Right cardiac atrium (tissue), 5 donors: ENCODE measurements at regions of chr16 and their contacts with region 1.

Region 1: DNA sequence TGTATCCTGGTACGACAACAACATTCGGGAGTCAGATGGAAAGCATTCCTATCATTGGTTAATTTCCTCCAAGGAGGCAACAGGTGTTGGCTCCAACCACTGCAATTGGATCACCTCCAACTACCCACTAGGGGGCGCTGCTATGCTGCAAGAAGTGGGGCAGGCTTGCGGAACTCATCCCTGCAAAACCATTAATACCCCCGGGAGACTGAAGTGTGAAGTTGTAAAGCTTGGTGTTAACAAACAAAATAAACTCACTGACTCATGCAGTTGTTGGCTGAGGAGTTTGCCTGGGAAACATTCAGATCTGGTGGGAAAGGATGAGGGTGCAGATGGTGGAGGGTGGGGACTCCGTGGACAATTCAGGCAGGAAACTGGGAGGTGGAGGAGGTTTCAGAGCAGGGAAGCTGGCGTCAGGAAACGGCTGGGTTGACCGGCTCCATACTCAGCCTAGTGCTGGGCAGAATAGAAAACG is 84.9 kb downstream of the HS3ST2 start:
- DNase-seq: peak; percentile 72 to 85 (median 81)
- ATAC-seq: peak; percentile 89 to 96
- H3K4me3 ChIP-seq: no peak overlapping the region
- H3K27ac ChIP-seq: no peak overlapping the region
- H3K4me1 ChIP-seq: no peaks in the 10 kb centered on the region
- H3K27me3 ChIP-seq: no peaks in the 10 kb centered on the region

Region 2: GRCh38 chr16:22948603-22949368 is 49.9 kb after region 1 on chr16:
- intact Hi-C with region 1: loop called in 2 of 4 experiments (anchors 5 to 10 kb)
- DNase-seq: peak; percentile 63 to 83 (median 69)
- ATAC-seq: peak; percentile 82 to 86
- H3K4me3 ChIP-seq: no peak overlapping the region
- H3K27ac ChIP-seq: no peak overlapping the region
- H3K4me1 ChIP-seq: no peaks in the 10 kb centered on the region
- H3K27me3 ChIP-seq: no peaks in the 10 kb centered on the region

Region 3: DNA sequence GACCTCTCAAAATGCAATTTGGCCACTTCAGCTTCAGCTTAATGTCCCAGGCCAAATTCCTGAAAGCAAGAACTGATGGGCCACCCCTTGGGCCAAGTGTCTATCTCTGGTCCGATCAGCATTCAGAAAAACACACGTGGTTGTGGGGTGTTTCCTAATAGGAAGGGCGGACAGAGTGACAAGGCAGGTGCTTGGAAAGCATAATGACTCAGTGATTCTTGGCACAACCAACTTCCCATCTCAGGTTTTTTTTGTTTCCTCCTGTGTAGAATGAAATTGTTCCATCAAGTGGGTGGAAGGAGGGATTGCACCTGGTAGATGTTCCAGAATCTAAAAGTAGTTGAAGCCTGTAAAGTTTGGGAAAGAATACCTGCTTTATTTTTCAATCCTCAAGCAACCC is 70.7 kb after region 1 on chr16:
- intact Hi-C with region 1: loop called in 2 of 4 experiments (anchors 10 kb)
- DNase-seq: peak in 1 of 3 donors; percentile 37
- ATAC-seq: peak in 1 of 2 donors; percentile 88
- H3K4me3 ChIP-seq: no peak overlapping the region
- H3K27ac ChIP-seq: no peak overlapping the region
- H3K4me1 ChIP-seq: peaks cover 9% of the 10 kb centered on the region
- H3K27me3 ChIP-seq: no peaks in the 10 kb centered on the region

Region 4: GRCh38 chr16:22977294-22977697 is 78.4 kb after region 1 on chr16:
- intact Hi-C with region 1: loop called in 1 of 4 experiments (anchors 10 kb)
- DNase-seq: no peak
- ATAC-seq: no peak
- H3K4me3 ChIP-seq: no peak overlapping the region
- H3K27ac ChIP-seq: no peak overlapping the region
- H3K4me1 ChIP-seq: no peaks in the 10 kb centered on the region
- H3K27me3 ChIP-seq: no peaks in the 10 kb centered on the region

Region 5: DNA sequence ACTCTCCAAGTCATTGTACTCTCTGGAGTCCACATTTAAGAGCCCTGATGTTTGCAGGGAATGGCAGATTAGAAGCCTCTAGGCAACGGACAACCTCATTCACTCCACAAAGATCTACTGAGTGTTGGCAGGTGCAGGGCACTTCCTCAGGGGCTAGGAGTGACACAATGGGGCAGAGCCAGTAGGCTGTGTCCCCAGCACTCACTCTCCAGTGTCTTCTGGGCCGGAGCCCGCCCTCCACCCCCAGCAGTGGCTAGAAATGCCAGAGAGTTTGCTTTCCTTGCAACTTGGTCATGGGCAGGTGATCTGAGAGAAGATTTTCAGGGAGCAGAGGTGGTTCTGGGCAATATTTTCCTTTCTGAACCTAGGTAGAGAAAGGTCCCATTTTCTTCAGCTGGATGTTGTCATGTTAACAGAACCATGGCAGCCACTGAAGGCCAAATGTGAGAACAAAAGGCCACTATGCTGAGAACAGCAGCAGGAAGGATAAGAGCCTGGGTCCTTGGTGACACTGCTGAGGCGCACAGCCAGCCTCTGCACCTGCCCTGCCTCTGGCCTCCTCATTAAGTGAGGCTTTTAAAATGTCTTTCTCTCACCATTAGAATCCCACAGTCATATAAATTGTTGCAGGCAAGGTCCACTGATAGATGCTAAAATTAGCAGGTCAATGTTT is 154.1 kb after region 1 on chr16:
- intact Hi-C with region 1: loop called in 1 of 4 experiments (anchors 10 kb)
- DNase-seq: no peak
- ATAC-seq: no peak
- H3K4me3 ChIP-seq: no peak overlapping the region
- H3K27ac ChIP-seq: no peak overlapping the region
- H3K4me1 ChIP-seq: no peaks in the 10 kb centered on the region
- H3K27me3 ChIP-seq: no peaks in the 10 kb centered on the region

Region 6: GRCh38 chr16:23060458-23061320 is 161.8 kb after region 1 on chr16:
- intact Hi-C with region 1: loop called in 2 of 4 experiments (anchors 5 to 10 kb)
- DNase-seq: peak; percentile 58 to 80 (median 63)
- ATAC-seq: peak; percentile 83 to 90
- H3K4me3 ChIP-seq: no peak overlapping the region
- H3K27ac ChIP-seq: no peak overlapping the region
- H3K4me1 ChIP-seq: no peaks in the 10 kb centered on the region
- H3K27me3 ChIP-seq: no peaks in the 10 kb centered on the region

Region 7: GRCh38 chr16:23324730-23325129 is 425.8 kb after region 1 on chr16:
- intact Hi-C with region 1: no loop called
- DNase-seq: peak; percentile 33 to 62 (median 60)
- ATAC-seq: peak in 1 of 2 donors; percentile 36
- H3K4me3 ChIP-seq: no peak overlapping the region
- H3K27ac ChIP-seq: no peak overlapping the region
- H3K4me1 ChIP-seq: no peaks in the 10 kb centered on the region
- H3K27me3 ChIP-seq: no peaks in the 10 kb centered on the region

Region 8: GRCh38 chr16:23435500-23435899 is 536.6 kb after region 1 on chr16:
- intact Hi-C with region 1: loop called in 2 of 4 experiments (anchors 2 to 10 kb)
- DNase-seq: peak; percentile 45 to 77 (median 76)
- ATAC-seq: peak; percentile 68 to 78
- H3K4me3 ChIP-seq: no peak overlapping the region
- H3K27ac ChIP-seq: no peak overlapping the region
- H3K4me1 ChIP-seq: no peaks in the 10 kb centered on the region
- H3K27me3 ChIP-seq: no peaks in the 10 kb centered on the region